Left cardiac atrium (tissue), 4 donors: ENCODE measurements at regions of chr11 and their contacts with region 1.

Region 1: GRCh38 chr11:32960553-32961164 is 55.0 kb upstream of the DEPDC7 start:
- DNase-seq: no peak
- ATAC-seq: no peak

Region 2: GRCh38 chr11:32511926-32512325 is 448.7 kb before region 1 on chr11:
- intact Hi-C with region 1: no loop called
- DNase-seq: no peak
- ATAC-seq: no peak

Region 3: DNA sequence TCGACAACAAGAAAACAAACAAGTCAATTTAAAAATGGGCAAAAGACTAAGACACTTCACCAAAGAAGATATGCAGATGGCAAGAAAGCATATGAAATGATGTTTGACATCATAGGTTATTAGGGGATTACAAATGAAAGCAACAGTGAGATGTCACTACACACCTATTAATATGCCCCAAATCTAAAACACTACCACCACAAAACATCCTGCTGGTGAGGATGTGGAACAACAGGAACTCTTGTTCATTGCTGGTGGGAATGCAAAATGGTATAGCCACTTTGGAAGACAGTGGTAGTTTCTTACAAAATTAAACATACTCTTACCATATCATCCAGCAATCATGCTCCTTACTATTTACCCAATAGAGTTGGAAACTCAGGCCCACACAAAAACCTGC is 101.9 kb before region 1 on chr11:
- intact Hi-C with region 1: no loop called
- DNase-seq: no peak
- ATAC-seq: no peak

Region 4: GRCh38 chr11:33065445-33066178 is 105.0 kb after region 1 on chr11:
- intact Hi-C with region 1: loop called (anchors 2 to 5 kb)
- DNase-seq: peak; percentile 51
- ATAC-seq: peak; percentile 86 to 92